Psoas muscle (tissue), 8 donors: ENCODE measurements at regions of chr1 and their contacts with region 1.

Region 1: DNA sequence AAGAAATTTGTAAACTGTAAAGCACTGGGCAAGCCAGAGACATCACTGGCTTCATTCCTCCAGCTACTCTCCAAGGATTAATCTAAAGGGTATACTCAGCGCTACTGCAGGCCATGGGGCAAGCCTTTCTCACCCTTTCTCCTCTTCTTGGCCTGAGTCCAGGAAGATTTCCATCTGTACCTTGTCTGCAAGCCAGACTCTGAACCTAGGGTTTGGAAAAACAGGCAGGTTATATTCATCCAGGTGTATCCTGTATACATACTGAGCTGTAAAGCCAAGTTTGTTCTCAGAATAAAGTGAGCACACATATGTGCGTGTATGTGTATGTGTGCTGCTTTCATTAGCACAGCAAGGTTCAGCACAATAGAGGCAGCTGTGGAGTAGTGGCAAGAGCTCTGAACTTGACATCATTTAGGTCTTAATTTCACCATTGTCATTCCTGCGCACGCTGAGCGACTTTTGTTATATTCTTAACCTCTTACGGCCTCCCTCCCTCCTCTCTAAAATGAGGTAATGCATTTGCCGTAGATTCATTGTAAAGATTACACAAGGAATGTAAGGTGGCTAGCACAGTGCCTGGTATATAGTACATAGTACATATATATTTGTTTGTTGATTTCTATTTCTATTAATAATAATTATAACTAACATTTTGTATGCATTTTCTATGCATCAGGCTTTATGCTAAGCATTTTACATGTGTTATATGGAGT is 128.2 kb upstream of the JUN start:
- DNase-seq: no peak
- ATAC-seq: no peak
- H3K4me3 ChIP-seq: no peak overlapping the region
- H3K27ac ChIP-seq: no peak overlapping the region
- H3K4me1 ChIP-seq: peaks cover 18% of the 10 kb centered on the region
- H3K27me3 ChIP-seq: no peaks in the 10 kb centered on the region
- CTCF ChIP-seq: no peak

Region 2: GRCh38 chr1:58857680-58858673 is 54.0 kb before region 1 on chr1:
- intact Hi-C with region 1: no loop called
- DNase-seq: no peak
- ATAC-seq: no peak
- H3K4me3 ChIP-seq: no peak overlapping the region
- H3K27ac ChIP-seq: no peak overlapping the region
- H3K4me1 ChIP-seq: no peaks in the 10 kb centered on the region
- H3K27me3 ChIP-seq: no peaks in the 10 kb centered on the region
- CTCF ChIP-seq: no peak

Region 3: GRCh38 chr1:58950897-58951296 is 38.9 kb after region 1 on chr1:
- intact Hi-C with region 1: loop called in 1 of 2 experiments (anchors 5 kb)
- DNase-seq: no peak
- ATAC-seq: no peak
- H3K4me3 ChIP-seq: no peak overlapping the region
- H3K27ac ChIP-seq: no peak overlapping the region
- H3K4me1 ChIP-seq: no peaks in the 10 kb centered on the region
- H3K27me3 ChIP-seq: no peaks in the 10 kb centered on the region
- CTCF ChIP-seq: no peak